ENCODE measurements at regions of chr5 and their contacts with region 1.

Region 1: DNA sequence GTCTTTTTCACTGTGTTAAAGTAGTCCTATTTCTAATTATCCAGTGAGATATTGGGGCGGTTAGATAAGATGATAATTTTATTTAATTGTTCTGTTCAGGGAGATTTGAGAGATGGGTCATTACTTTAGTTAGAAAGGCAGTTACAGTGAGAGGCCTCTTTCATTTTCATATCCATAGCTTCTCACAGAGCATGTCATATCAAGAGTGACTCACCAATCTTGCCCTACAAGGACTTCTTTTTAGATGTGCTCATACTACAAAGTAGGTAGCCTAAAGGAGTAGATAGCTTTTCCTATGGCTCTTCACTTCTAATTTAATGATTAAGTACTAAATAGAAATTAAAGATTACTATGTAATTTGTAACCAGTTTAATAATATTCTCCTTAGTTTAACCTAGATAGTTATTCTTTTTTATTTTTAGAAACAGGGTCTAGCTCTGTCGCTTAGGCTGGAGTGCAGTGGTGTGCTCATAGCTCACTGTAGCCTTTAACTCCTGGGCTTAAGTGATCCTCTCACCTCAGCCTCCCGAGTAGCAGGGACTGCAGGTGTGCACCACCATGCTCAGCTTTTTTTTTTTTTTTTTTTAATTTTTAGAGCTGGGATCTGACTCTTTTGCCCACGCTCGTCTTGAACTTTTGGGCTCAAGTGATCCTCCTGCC is 71.0 kb downstream of the FER start:
- DNase-seq: peak; percentile 31
- ATAC-seq: peak; percentile 99
- H3K4me3 ChIP-seq: no peak overlapping the region
- H3K27ac ChIP-seq: peak overlapping the region; percentile 39; the same call in 1 of the 2 replicates
- H3K4me1 ChIP-seq: no peaks in the 10 kb centered on the region
- H3K27me3 ChIP-seq: no peaks in the 10 kb centered on the region
- CTCF ChIP-seq: no peak
- EP300 ChIP-seq: no peak
- POLR2A ChIP-seq: no peak
- RAD21 ChIP-seq: no peak

Region 2: DNA sequence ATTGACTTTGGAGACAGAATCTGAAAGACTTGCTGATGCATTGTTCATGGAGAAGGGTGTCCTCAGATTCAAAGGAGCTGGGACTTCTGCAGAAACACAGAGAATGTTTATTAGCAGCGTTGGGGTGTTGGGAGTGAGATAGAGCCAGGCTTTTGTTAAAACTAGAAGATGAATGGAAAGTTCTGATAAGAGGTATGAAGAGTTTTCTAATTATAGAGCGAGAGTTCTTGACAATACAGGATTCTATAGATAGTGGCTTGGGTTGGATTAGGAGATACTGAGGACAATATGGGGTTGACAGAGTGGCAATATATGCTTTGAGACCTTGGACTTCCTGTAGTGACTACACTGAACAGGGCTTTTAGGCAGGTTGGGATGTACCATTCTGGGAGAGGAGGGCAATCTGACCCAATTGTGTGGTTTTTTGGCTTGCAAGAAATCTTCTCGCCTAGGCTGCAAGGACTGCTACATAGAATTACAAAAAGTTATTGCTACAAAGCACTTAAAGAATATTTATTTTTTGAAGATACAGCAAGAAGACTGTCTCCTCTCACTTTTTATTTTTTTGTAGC is 12.0 kb after region 1 on chr5:
- CTCF ChIA-PET with region 1: interaction called, 11 read pairs
- POLR2A ChIA-PET with region 1: interaction called, 4 read pairs
- RAD21 ChIA-PET with region 1: interaction called, 3 read pairs
- SMC1A ChIA-PET with region 1: interaction called, 24 read pairs
- in situ Hi-C with region 1: no loop called
- intact Hi-C with region 1: no loop called
- DNase-seq: no peak
- ATAC-seq: no peak
- H3K4me3 ChIP-seq: no peak overlapping the region
- H3K27ac ChIP-seq: no peak overlapping the region
- H3K4me1 ChIP-seq: no peaks in the 10 kb centered on the region
- H3K27me3 ChIP-seq: no peaks in the 10 kb centered on the region
- CTCF ChIP-seq: no peak
- EP300 ChIP-seq: no peak
- POLR2A ChIP-seq: no peak
- RAD21 ChIP-seq: no peak

Region 3: DNA sequence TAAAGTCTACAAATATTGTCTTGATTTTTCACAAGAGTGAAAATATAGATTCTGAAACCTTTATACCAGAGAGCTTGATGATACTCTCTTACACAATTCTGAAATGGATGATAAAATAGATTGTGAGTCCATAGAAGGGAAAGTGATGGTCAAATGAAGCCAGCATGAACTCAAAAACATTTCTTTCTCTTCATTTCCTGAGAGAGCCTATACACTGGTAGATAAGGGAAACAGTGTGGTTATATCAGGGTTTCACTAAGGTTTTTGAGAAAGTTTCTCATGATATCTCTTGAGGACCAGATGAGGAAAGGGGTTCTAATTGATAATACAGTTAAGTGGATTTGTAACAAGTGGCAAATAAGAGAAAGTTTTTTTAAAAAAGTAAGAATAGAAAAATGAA is 336.9 kb after region 1 on chr5:
- CTCF ChIA-PET with region 1: no interaction called
- POLR2A ChIA-PET with region 1: no interaction called
- RAD21 ChIA-PET with region 1: no interaction called
- SMC1A ChIA-PET with region 1: no interaction called
- in situ Hi-C with region 1: no loop called
- intact Hi-C with region 1: no loop called
- DNase-seq: no peak
- ATAC-seq: peak; percentile 64
- H3K4me3 ChIP-seq: no peak overlapping the region
- H3K27ac ChIP-seq: no peak overlapping the region
- H3K4me1 ChIP-seq: no peaks in the 10 kb centered on the region
- H3K27me3 ChIP-seq: no peaks in the 10 kb centered on the region
- CTCF ChIP-seq: no peak
- EP300 ChIP-seq: no peak
- POLR2A ChIP-seq: no peak
- RAD21 ChIP-seq: no peak